MCF 10A (cell line): ENCODE measurements at regions of chr12 and their contacts with region 1.

Region 1: GRCh38 chr12:108313606-108314351 is 25.3 kb downstream of the CMKLR1 start:
- DNase-seq: no peak
- H3K4me3 Mint-ChIP-seq: no peak overlapping the region
- H3K27ac Mint-ChIP-seq: no peak overlapping the region
- H3K4me1 Mint-ChIP-seq: peaks cover 11% of the 10 kb centered on the region
- H3K27me3 Mint-ChIP-seq: no peaks in the 10 kb centered on the region
- CTCF ChIP-seq: no peak

Region 2: DNA sequence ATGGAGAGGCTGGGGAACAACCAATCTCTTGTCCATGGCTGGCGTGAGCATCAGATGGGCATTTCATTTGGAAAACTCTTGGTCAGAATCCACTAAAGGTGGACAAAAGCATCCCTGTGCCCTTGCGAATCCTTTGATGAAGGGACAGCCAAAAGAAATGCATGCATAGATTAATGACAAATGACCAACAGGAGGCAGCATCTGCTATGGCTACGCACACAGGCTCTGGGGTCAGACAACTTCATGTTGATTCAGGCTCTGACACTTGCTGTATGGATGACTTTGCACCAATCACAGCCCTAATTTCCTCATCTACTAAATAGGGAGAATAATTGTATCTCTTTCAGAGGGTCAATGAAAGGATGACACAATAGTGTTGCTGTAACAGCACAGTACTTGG is 421.8 kb before region 1 on chr12:
- CTCF ChIA-PET with region 1: no interaction called
- POLR2A ChIA-PET with region 1: no interaction called
- intact Hi-C with region 1: no loop called
- DNase-seq: peak; percentile 6
- H3K4me3 Mint-ChIP-seq: no peak overlapping the region
- H3K27ac Mint-ChIP-seq: no peak overlapping the region
- H3K4me1 Mint-ChIP-seq: no peaks in the 10 kb centered on the region
- H3K27me3 Mint-ChIP-seq: peaks cover 16% of the 10 kb centered on the region
- CTCF ChIP-seq: peak; percentile 15

Region 3: GRCh38 chr12:108324351-108325017 is 10.7 kb after region 1 on chr12:
- CTCF ChIA-PET with region 1: no interaction called
- POLR2A ChIA-PET with region 1: no interaction called
- intact Hi-C with region 1: no loop called
- DNase-seq: no peak
- H3K4me3 Mint-ChIP-seq: no peak overlapping the region
- H3K27ac Mint-ChIP-seq: no peak overlapping the region
- H3K4me1 Mint-ChIP-seq: no peaks in the 10 kb centered on the region
- H3K27me3 Mint-ChIP-seq: peaks cover 37% of the 10 kb centered on the region
- CTCF ChIP-seq: no peak

Region 4: DNA sequence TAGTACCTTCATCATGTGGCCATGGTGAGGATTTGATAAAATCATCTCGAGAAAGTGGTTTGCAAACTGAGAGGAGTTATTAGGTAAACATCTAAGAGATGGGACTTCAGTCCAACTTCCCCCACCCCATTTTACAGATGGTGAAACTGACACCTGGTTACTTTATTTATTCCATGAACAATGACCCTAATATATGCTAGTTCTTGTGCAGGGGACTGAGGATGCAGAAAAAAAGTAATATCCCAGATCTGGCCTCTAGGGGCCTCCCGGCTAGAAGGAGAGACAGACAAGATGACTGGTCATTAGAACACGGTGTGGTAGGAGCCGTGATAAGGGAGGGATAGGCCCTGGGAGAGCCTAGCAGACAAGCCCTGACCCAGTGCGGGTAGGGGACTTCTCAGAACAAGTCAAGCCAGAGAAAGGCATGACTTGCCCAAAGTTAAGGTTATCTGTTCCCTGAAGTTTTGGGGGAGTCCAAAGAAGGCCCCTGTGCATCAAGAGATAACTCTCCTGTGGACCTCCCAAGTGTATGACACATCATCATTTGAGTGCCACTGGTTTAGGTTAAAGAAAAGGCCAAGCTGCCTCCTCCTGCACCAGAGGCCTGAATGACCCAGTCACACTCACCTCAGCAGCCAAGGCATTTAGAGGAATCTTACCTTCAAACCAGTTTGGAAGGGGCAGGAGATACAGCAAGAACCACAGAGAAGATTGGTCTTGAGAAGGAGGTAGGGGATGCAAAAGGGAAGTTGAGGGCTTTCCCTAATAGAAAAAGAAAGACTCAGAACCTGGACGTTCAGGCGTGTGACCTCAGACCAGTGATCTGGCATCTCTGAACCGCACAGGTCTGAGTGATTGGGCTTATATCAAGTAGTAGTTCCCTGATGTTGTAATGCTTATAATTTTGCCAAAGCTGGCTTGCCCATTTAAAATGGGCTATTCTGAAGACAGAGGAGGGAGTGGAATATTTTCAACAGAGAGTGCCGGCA is 23.8 kb after region 1 on chr12:
- CTCF ChIA-PET with region 1: interaction called, 3 read pairs
- POLR2A ChIA-PET with region 1: no interaction called
- intact Hi-C with region 1: loop called (anchors 2 kb)
- DNase-seq: peak; percentile 55
- H3K4me3 Mint-ChIP-seq: no peak overlapping the region
- H3K27ac Mint-ChIP-seq: no peak overlapping the region
- H3K4me1 Mint-ChIP-seq: peaks cover 18% of the 10 kb centered on the region
- H3K27me3 Mint-ChIP-seq: no peaks in the 10 kb centered on the region
- CTCF ChIP-seq: peak; percentile 51